ENCODE measurements at regions of chr17 and their contacts with region 1.

Region 1: DNA sequence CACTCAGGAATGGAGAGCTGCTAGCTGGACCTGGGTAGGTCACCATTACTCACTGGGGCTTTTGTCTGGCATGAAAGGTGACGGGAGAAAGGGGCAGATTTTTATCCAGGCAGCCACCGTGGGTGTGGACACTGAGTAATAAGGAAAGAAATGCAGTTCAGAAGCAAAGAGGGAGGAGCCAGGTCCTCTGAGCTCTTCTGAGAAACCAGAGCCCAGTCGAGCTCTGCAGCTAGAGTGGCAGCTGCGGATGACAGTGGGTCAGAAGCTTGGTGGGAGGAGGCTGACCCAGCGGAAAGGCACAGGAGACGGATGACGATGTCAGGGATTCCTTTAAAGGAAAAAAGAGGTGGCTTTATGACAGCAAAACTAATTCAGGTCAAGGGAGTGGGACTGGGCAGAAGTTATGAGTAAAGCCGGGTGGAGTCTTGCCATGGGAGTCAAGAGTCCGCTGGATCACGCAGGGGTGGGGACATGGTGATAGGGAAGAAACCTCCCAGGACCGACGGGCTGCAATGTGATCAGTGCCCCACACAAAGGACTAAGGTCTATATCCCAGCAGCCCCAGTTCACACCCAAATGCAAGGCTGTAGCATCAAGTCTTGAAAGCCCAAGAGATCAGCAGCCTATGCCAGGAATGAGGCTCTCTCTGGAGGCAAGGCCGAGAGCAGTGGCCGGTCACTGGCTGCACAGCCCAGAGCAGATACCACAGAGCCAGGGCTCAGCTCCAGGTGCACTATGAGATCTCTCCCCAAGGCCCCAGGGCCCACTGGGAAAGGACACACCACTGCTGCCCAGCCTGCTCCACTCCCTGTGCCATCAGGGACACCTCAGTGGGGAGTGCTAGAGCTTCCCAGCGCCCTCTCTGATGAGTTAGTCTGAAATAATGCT is 6.3 kb upstream of the MNT start:
- DNase-seq: peak; percentile 86
- H3K4me3 Mint-ChIP-seq: peak overlapping the region; percentile 65
- H3K27ac Mint-ChIP-seq: peak overlapping the region; percentile 98
- H3K4me1 Mint-ChIP-seq: peaks cover 36% of the 10 kb centered on the region
- H3K27me3 Mint-ChIP-seq: no peaks in the 10 kb centered on the region
- CTCF ChIP-seq: no peak

Region 2: DNA sequence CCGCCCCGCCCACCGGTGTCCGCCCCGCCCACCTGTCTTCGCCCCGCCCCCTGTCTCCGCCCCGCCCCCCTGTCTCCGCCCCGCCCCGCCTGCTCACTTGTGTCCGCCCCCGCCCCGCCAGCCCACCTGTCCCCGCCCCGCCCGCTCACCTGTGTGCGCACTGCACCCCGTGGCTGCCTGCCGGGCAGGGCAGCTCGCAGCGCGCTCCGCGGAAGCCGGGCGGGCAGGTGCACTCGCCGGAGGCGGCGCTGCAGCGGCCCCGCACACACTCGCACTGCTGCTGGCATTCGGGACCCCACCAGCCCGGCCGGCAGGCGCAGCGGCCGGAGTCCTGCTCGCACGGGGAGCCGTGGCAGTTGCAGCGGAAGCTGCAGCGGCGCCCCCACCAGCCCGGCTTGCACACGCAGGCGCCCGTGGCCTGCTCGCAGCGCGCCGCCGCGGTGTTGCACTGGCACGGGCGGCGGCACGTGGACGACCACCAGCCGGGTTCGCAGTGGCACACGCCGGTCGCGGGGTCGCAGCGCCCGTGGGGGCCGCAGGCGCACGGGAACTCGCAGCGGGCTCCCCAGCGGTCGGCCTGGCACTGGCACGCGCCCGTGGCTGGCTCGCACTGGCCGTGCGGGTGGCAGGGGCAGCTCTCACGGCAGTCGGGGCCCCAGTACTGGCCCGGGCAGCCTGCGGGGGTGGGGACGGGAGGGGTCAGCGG is 763.7 kb before region 1 on chr17:
- CTCF ChIA-PET with region 1: no interaction called
- POLR2A ChIA-PET with region 1: no interaction called
- intact Hi-C with region 1: no loop called
- DNase-seq: peak; percentile 56
- H3K4me3 Mint-ChIP-seq: peak overlapping the region; percentile 60
- H3K27ac Mint-ChIP-seq: no peak overlapping the region
- H3K4me1 Mint-ChIP-seq: peaks cover 8% of the 10 kb centered on the region
- H3K27me3 Mint-ChIP-seq: no peaks in the 10 kb centered on the region
- CTCF ChIP-seq: no peak

Region 3: DNA sequence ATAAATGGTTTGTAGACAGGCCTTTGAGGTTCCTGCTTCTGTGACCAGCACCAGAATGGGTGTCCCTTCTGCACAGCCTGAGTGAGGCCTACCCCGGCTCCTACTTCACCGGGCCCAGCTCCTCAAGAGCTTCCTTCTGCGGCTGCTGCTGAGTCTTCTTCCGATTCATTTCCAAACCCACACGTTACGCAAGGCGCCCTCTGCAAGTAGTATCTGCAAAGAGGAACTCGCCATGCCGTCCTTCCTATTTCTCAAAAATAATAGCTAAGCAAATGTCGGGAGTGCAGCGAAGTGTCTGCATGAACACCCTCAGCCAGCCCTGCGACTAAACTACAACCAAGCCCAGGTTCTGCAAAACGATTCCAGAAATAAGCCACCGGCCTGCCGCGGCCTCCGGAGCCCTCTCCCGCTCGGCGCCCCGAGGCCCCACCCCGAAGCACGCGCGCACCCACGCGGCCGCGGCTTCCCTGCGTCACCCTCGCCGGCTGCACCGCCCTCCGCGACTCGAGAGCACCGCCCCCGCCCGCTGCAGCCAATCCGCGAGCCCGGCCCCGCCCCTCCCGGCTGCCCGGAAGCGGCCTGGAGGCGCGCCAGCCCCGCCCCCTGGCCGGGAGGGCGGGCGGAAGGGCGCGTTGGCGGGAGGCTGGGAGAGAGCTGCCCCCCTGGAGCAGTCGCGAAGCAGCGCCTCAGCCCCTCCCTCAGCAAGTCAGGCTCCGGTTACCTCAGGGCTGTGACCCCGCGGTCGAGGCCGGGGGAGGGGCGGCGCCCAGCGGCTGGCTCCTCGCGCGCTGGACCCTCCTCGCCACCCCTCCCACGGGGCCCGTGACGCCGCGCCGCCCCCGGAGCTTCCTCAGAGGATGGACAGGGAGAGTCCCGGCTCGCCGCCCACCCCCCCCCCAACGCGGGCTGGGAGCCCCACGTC is 14.6 kb before region 1 on chr17:
- CTCF ChIA-PET with region 1: interaction called, 309 read pairs
- POLR2A ChIA-PET with region 1: interaction called, 77 read pairs
- intact Hi-C with region 1: no loop called
- DNase-seq: peak; percentile 91
- H3K4me3 Mint-ChIP-seq: peak overlapping the region; percentile 71
- H3K27ac Mint-ChIP-seq: peak overlapping the region; percentile 83
- H3K4me1 Mint-ChIP-seq: peaks cover 18% of the 10 kb centered on the region
- H3K27me3 Mint-ChIP-seq: no peaks in the 10 kb centered on the region
- CTCF ChIP-seq: no peak

Region 4: GRCh38 chr17:2421315-2422147 is 14.4 kb after region 1 on chr17:
- CTCF ChIA-PET with region 1: interaction called, 21 read pairs
- POLR2A ChIA-PET with region 1: interaction called, 39 read pairs
- intact Hi-C with region 1: no loop called
- DNase-seq: no peak
- H3K4me3 Mint-ChIP-seq: no peak overlapping the region
- H3K27ac Mint-ChIP-seq: no peak overlapping the region
- H3K4me1 Mint-ChIP-seq: peaks cover 9% of the 10 kb centered on the region
- H3K27me3 Mint-ChIP-seq: no peaks in the 10 kb centered on the region
- CTCF ChIP-seq: no peak

Measured in MCF 10A (cell line).